ENCODE measurements at regions of chr5 and their contacts with region 1.

Region 1: DNA sequence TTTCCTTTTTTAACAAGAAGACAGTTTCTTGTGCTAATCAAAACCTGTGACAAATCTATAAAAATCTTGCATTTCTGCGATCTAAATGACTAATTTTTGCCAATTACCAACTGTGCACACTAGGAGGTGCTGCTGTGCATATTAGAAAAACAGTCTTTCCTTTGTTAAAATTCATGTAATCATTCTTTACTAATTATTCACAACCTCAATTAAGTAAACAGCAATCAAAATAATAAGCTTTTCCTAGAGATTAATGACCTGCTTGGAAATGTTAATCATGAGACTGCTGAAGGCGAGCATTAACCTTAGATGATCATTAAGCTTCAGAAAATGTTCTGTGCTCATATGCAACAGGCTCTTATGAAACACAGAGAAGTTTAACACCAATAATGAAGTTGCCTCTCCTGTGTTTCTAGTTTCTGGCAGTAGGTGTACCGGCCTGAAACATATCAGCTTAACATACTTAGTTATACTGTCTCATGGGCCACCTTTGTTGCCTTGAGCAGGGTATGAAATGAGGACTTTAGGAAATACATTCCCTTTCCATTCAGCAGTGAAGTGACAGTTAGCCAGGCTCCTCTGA is 17.7 kb downstream of the RFESD start:
- H3K4me3 ChIP-seq: no peak overlapping the region
- H3K27ac ChIP-seq: no peak overlapping the region
- H3K4me1 ChIP-seq: no peaks in the 10 kb centered on the region
- CTCF ChIP-seq: no peak; the same call in 1 of the 2 replicates

Region 2: DNA sequence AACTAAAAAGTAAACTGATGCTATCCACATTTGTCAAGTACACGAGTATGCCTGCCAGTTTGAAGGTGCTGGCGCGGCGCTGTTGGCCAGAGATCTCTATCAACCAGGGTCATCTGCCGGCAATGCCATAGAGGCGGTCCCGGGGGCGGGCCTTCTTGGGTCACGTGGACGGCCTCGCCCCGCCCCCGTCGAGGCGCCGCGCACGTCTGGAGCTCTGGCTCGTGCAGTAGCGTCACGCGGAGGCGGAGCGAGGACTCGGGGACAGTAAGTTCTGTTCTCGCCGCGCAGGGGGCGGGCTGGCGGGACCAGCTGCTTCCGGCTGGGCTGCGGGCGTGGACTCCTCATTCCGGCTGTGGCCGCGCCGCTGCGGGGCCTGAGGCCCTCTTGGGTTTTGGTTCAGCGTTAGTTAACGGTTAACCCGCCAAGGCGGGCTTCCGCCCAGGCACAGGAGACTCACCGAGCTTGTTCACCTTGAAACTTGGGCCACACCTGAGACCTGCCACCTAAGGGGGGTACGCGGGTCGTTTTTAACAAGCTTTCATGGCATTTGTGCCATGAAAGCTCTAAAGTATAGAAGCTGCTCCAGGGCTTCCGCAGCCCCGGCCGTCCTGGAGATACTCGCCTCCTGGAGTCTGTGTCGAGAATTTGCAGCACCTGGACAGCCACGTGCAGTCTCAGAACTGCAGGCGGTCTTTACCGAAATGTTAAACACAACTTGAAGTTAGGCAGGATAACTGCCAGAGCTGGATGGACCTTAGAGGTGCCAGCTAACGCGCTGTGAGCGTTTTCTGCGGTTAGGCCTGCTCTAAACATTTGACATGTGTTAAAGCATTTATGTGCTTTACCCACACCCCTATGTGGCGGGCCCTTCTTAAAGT is 17.5 kb before region 1 on chr5 and contains the start of gene RFESD:
- CTCF ChIA-PET with region 1: interaction called, 44 read pairs
- POLR2A ChIA-PET with region 1: interaction called, 4 read pairs
- H3K4me3 ChIP-seq: peak within 1 kb of the TSS; percentile 40
- H3K27ac ChIP-seq: peak within 1 kb of the TSS; percentile 79
- H3K4me1 ChIP-seq: peaks cover 5% of the 10 kb centered on the region; the same call in 1 of the 2 replicates
- CTCF ChIP-seq: 0 out of 2 replicates have a peak, but pooled peaks have one; percentile 37

Region 3: GRCh38 chr5:95686651-95687050 is 22.4 kb after region 1 on chr5:
- CTCF ChIA-PET with region 1: interaction called, 14 read pairs
- POLR2A ChIA-PET with region 1: no interaction called
- H3K4me3 ChIP-seq: no peak overlapping the region
- H3K27ac ChIP-seq: no peak overlapping the region
- H3K4me1 ChIP-seq: no peaks in the 10 kb centered on the region
- CTCF ChIP-seq: no peak

Region 4: GRCh38 chr5:95697781-95698681 is 33.7 kb after region 1 on chr5:
- CTCF ChIA-PET with region 1: interaction called, 10 read pairs
- POLR2A ChIA-PET with region 1: no interaction called
- H3K4me3 ChIP-seq: no peak overlapping the region
- H3K27ac ChIP-seq: no peak overlapping the region
- H3K4me1 ChIP-seq: 0 out of 2 replicates have a peak, but pooled peaks cover 6% of the 10 kb centered on the region
- CTCF ChIP-seq: no peak

Region 5: DNA sequence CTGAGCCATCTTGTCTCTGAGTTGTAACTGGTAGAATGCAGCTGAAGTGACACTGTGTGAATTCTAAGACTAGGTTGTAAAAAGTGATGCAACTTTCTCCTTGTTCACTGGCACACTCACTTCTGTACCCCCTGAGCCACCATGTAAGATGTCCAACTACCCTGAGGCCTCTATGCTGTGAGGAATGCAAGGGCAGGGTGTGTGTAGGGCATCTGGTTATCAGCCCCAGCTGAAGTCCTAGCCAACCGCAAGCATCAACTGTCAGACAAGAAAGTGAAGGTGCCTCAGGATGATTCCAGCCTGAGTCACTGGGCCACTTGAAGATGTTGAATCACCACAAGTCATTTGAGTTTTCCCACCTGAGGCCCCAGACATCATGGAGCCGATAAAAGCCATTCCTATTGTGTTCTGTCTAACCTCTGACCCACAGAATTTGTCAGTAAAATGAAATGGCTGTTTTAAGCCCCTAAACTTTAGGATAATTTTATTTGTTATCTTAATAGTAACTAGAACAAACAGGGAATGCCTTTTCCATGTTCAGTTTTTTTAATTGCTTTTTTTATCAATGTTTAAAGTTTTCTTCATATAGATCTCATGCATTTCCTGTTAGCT is 48.2 kb after region 1 on chr5:
- CTCF ChIA-PET with region 1: interaction called, 11 read pairs
- POLR2A ChIA-PET with region 1: no interaction called
- H3K4me3 ChIP-seq: no peak overlapping the region
- H3K27ac ChIP-seq: peak overlapping the region; percentile 50; the same call in 1 of the 2 replicates
- H3K4me1 ChIP-seq: peaks cover 4% of the 10 kb centered on the region; the same call in 1 of the 2 replicates
- CTCF ChIP-seq: no peak

Region 6: DNA sequence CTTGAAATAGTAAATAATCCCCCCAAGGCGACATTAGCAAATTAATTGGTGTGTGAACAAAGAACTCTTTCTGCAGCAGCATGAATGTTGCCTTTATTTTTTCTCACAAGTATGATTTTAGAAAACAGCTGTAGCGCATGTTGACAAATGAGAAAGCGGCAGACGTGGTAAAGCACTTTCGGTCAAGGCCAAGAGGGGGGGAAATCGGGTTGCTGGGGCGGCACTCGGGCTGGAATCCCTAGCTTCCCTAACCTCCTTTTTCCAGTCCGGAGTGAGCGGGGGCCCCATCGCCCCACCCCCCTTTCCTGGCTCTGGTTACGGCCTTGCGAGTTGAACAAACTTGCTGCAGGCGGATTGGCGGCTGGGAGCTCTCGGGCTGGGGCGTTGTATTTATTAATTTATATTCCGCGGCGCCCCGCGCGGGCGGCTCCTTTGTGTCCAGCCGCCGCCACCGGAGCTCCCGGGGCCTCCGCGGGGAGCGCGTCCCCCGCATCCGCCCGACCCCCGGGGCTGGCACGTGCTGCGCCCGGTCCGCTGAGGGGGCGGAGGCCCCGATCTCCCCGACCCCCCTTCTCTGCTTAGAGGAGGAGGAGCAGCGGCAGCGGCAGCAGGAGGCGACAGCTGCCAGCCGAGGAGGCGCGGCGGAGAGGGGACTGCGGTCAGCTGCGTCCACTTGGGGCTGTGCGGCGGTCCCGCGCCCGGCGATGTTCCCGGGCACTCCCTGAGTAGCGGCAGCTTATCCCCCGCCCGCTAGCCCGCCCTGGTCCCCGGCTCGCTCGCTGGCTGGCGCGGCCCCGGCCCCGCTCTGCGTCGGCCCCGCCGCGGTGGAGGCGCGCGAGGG is 66.7 kb after region 1 on chr5 and contains the start of gene RHOBTB3:
- CTCF ChIA-PET with region 1: interaction called, 30 read pairs
- POLR2A ChIA-PET with region 1: interaction called, 4 read pairs
- H3K4me3 ChIP-seq: peak within 1 kb of the TSS; percentile 93
- H3K27ac ChIP-seq: peak within 1 kb of the TSS; percentile 93
- H3K4me1 ChIP-seq: peaks cover 8% of the 10 kb centered on the region
- CTCF ChIP-seq: no peak; the same call in 1 of the 2 replicates

Region 7: DNA sequence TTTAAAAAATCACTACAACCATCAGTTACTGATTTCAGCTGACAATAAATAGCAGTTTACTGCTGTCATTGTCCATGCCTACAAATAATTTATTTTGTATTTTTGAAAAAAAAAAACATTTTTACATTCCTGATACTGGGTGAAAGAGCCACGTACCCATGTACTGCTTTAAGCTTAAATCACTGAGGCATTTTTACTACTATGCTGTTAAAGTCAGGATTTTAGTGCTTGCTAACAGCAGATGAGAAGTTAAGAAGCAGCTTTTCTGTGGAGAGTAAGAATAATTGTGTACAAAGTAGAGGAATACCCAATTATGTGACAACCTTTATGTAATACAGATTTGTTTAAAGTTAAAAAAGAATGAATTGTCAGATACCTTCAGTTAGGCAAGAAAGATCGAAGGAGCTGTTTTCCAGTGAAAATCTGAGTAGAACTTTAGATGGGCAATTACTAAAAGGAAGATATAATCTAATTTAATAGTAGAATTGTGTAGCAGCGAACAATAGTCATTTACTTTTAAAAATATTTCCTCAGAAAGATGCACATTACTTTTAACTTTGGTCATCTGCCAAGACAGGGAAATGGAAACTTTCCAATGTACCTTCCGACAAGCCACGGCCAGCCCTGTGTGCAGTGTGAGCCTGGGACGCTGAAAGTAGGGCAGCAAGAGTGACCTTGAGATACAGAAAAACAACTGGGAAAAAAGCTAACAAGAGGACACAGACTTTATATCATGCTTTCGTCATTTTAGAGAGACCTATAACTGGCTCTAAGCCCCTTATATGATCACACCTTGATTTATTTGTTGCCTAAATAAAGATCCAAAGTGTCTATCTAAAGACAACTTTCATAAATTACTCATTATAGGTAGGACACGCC is 106.8 kb after region 1 on chr5:
- CTCF ChIA-PET with region 1: interaction called, 21 read pairs
- POLR2A ChIA-PET with region 1: no interaction called
- H3K4me3 ChIP-seq: no peak overlapping the region
- H3K27ac ChIP-seq: no peak overlapping the region
- H3K4me1 ChIP-seq: peaks cover 6% of the 10 kb centered on the region; the same call in 1 of the 2 replicates
- CTCF ChIP-seq: no peak